ENCODE measurements at regions of chr4 and their contacts with region 1.

Region 1: DNA sequence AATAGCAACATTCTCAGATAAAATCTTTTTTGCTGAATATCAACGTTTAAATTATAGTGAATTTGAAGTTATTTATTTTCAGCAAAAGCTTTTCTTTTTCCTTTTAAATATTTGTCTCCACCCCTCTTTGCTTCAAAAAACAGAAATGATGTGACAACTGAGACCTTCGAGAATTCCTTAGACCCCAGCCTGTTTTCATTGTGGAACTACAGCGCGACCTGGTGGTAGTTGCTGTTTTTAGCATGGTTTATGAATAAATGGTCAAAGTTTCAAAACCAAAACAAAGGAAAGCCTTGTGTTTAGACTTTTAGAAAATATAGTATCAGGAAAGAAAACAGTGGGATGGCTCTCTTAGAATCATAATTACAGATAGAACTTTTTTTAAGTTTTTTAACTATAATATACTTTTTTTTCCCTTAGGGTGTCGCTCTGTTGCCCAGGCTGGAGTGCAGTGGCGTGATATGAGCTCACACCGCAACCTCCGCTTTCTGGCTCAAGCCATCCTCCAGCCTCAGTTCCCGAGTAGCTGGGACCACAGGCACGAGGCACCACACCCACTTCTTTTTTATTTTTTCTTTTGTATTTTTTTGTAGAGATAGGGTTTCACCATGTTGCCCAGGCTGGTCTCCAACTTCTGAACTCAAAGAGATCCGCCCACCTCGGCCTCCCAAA is 26.8 kb upstream of the TMEM184C start:
- DNase-seq: peak in 9 of 10 donors; percentile 15 to 93 (median 75)

Region 2: DNA sequence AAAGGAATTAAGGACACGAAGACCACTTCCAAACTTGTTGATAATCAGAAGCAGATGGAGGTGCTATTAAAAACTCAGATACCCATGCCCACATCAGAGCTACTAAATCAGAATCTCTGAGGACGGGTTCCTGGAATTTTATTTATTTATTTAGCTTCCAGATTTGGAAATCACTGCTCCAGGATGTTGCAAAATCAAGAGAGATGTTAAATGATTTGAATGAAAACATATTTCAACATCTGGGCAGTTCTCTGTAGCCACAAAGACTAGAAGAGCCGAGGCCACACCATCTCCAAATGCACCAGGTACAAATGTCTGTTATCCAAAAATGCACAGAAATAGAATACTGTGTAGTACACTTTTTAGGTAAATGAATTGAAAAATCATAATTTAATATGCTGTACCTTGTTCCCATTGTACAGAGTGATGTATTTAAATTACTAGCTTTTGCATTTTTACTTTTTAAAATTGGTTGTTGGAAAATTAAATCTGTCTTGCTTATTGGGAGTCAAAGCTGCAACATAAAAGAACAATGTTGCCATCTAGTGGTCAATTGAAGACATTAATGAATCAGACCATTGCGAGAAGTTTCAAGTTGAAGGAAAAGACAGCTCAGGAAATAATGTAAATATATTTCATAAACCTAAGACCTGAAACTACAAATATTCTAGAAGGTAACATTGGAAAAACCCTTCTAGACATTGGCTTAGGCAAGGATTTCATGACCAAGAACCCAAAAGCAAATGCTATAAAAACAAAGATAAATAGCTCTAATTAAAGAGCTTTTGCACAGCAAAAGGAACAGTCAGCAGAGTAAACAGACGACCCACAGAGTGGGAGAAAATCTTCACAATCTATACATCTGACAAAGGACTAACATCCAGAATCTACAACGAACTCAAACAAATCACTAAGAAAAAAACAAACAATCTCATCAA is 493.4 kb before region 1 on chr4:
- intact Hi-C with region 1: loop called (anchors 5 kb)
- DNase-seq: no peak

Region 3: GRCh38 chr4:147111033-147111367 is 479.4 kb before region 1 on chr4:
- intact Hi-C with region 1: loop called (anchors 5 kb)
- DNase-seq: no peak

Region 4: GRCh38 chr4:147160908-147161513 is 429.4 kb before region 1 on chr4:
- intact Hi-C with region 1: loop called (anchors 1 kb)
- DNase-seq: no peak

Region 5: DNA sequence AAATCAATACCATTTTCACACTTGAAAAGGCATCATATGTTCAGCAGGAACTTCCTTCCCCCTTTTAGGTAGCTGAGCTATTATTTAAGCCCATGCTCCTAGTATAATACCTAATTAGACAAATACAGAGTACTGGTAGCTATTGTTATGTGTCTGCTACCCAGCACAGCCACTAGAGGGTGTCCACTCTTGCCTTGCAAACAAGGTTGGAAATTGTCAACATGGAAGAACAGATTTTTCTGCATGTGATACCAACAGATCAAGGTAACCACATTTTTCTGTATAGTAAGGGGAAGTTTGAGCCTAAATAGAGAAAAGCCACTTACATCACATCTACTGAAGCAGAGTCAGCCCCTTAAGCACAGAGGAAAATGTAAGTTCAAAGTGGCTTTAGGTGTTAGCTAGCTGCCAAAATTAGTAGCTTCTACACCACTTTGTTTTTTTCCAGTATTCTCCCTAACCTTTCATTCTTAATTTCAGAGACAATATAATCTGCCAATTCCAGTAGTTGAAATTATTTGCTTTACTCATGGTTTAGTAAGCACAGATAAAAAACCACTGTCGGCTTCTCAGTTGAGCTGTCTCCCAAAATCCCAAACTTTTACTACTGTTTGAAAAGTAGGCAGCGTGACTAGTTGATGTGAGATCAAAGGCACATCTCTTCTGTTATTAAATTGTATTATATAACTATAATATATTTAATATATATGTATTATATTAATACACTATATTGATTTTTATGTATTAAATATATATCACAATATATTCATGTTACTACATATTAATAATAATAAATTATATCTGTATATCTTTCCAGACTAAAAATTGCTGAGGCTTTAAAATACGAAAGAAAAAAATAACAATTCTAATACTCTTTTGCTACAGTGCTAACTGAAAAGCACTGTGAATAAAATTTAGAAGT is 71.3 kb before region 1 on chr4:
- intact Hi-C with region 1: loop called (anchors 2 kb)
- DNase-seq: peak in 7 of 10 donors; percentile 16 to 83 (median 44)

Region 6: DNA sequence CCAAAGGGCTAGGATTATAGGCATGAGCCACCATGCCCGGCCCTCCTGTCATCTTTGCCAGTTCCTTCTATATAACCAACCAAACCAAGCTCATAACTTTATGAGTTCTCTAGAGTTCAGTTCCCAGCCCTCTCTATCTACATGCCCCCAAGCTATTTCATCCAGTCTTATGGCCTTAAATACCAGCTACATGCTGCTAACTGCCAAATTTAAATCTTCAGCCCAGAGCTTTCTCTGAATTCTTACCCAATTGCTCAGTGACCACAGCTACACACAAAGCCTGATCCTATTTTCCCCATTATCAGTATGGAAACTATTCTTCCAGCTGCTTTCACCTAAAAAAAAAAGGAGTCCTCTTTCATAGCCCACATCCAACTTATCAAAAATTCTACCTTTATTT is 49.9 kb after region 1 on chr4:
- intact Hi-C with region 1: no loop called
- DNase-seq: no peak

Region 7: DNA sequence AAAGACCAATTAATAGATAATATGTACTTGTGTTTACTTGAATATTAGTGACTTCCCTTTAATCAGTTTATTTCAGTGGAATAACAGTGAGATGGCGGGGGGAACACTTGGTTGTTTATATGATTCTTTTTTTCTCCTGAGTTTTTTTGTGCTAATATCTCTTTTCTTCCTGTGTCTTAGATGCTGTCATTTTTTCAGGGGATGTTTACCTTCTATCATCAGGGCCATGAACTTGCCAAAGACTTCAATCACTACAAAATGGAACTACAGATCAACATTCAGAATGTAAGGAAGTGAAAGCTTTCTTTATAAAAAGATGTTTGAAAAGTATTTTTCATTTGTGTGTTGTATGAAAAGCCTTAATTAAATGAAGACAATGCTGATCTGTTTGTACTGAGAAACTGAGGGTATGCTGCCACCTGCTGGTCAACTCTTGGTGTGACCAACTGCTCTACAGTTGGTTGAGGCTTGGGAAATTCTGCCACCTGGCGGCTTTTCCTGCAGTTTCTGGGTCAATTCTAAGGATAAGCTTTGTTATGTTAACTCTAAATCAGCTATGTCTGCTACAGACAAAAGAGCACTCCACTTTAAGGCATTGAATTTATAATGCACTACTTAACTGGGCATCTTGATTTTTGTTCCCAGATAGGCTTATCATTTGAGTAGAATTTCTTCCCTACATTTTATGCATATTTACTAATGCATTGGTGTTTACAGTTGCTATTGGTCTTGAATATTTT is 276.3 kb after region 1 on chr4:
- intact Hi-C with region 1: loop called (anchors 10 kb)
- DNase-seq: peak; percentile 82 to 98 (median 94)

Measured in posterior cingulate gyrus (tissue), 11 donors.